GM12878 (cell line): ENCODE measurements at regions of chr2 and their contacts with region 1.

Region 1: GRCh38 chr2:110713513-110714362 is 18.6 kb upstream of the ACOXL start:
- DNase-seq: no peak
- ATAC-seq: peak; percentile 55
- H3K4me3 ChIP-seq: no peak overlapping the region
- H3K27ac ChIP-seq: no peak overlapping the region
- H3K4me1 ChIP-seq: no peaks in the 10 kb centered on the region
- H3K27me3 ChIP-seq: peaks cover 0 to 3% of the 10 kb centered on the region in 2 experiments; a peak in 1 of 4 replicates
- CTCF ChIP-seq: no peak
- EP300 ChIP-seq: no peak
- POLR2A ChIP-seq: no peak
- RAD21 ChIP-seq: no peak

Region 2: DNA sequence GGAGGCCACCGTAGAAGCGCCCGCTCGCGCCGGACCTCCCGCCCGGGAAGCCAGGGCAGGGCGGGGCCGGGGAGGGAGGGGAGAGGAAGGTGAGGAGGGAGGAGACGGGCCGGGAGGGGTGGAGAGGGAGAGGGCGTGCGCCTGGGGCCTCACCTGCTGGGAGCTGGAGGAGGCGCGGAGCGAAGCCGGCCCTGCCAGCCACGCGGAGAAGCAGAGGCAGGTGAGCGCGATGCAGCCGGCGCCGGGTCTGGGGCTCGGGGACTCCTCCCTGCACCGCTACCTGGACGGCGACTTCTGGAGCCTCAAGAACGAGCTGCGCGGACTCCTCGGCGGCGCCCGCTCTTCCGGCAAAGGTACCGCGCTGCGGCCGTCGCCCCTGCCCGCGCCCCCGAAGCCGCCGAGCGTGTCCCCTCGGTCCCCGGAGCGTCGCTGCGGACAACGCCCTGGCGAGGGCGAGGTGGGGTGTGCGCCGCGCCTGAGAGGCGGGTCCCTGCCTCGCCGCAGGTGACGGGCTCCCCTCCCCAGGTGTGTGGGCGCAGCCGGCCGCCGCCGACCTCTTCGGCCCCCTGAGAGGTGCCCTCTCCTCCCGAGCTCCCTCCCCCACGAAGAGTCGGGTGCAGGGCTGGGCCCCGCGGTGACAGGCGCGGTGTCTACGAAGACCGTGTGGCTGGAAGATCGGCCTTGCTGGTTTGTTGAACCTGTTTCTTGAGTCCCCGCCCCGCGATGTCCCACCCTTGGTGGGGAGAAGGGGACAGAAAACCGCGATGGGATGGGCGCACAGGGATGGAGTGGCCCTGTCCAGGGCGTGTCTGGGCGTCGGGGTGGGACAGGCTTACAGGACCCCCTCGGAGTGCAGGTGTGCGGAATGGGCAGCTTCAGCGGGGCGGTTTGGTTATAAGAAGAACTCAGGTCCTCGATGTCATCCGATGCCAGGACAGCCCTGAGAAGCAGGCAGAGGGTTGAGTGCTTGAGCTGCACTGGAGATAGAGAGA is 19.0 kb after region 1 on chr2 and contains the start of gene ACOXL:
- CTCF ChIA-PET with region 1: no interaction called
- POLR2A ChIA-PET with region 1: interaction called, 3 read pairs
- RAD21 ChIA-PET with region 1: interaction called, 8 read pairs
- SMC1A ChIA-PET with region 1: interaction called, 12 read pairs
- in situ Hi-C with region 1: no loop called
- intact Hi-C with region 1: no loop called
- DNase-seq: no peak
- ATAC-seq: peak; percentile 56
- H3K4me3 ChIP-seq: no peak within 1 kb of the TSS; the same call in 1 of the 2 replicates
- H3K27ac ChIP-seq: no peak within 1 kb of the TSS
- H3K4me1 ChIP-seq: no peaks in the 10 kb centered on the region
- H3K27me3 ChIP-seq: peaks cover 5 to 19% of the 10 kb centered on the region in 2 experiments
- CTCF ChIP-seq: no peak
- EP300 ChIP-seq: no peak
- POLR2A ChIP-seq: no peak
- RAD21 ChIP-seq: no peak
- polyA plus RNA-seq, gene ACOXL: 0.05 to 0.47 TPM

Region 3: GRCh38 chr2:110737783-110738182 is 24.0 kb after region 1 on chr2:
- CTCF ChIA-PET with region 1: no interaction called
- POLR2A ChIA-PET with region 1: interaction called, 4 read pairs
- RAD21 ChIA-PET with region 1: interaction called, 3 read pairs
- SMC1A ChIA-PET with region 1: interaction called, 12 read pairs
- in situ Hi-C with region 1: no loop called
- intact Hi-C with region 1: no loop called
- DNase-seq: no peak
- ATAC-seq: no peak
- H3K4me3 ChIP-seq: no peak overlapping the region
- H3K27ac ChIP-seq: no peak overlapping the region
- H3K4me1 ChIP-seq: peaks cover 7% of the 10 kb centered on the region
- H3K27me3 ChIP-seq: peaks cover 5 to 9% of the 10 kb centered on the region in 2 experiments
- CTCF ChIP-seq: no peak
- EP300 ChIP-seq: no peak
- POLR2A ChIP-seq: no peak
- RAD21 ChIP-seq: no peak